ENCODE measurements at regions of chr12 and their contacts with region 1.

Region 1: DNA sequence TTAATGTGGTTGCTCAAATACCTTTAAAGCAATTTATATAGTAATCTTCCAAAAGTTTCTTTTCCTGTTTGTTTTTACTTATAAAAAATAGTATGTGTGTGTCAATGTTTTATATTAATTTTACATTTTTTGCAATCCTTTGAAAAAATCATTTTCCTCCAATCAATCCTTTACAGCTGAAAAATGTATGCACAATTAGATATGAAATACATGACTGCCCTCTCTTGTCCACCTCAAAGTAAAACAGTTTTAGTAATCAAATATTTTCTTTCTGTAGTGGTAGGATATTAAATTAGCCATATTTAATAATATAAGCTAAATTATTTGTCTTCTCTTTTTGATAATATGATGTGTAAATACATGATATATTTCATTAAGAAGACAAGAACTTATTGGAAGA is 269.9 kb downstream of the ADAMTS20 start:
- DNase-seq: peak; percentile 35
- H3K4me3 ChIP-seq: no peak overlapping the region
- H3K27ac ChIP-seq: no peak overlapping the region
- H3K4me1 ChIP-seq: peaks cover 5 to 7% of the 10 kb centered on the region in 2 experiments; a peak in 3 of 4 replicates
- H3K27me3 ChIP-seq: no peaks in the 10 kb centered on the region
- CTCF ChIP-seq: peak; percentile 51
- EP300 ChIP-seq: no peak
- RAD21 ChIP-seq: peak; percentile 85

Region 2: DNA sequence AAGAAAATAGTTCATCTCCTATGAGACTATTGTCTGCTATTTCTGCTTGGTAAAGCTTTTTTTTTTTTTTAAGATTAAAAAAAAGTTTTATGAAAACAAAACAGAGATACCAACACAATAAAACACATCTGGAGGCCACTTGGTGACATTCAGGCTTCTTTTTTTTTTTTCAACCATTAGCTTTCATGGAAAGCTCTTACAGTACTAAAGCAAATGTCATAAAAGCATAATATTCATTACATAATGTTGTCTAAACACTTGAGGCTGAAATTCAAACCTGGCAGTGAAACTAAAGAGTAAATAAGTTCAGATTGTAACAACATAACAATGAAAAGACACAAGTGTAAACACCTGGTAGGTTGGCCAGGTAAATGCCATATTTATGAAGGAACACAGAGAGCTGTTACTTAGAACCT is 707.2 kb before region 1 on chr12:
- CTCF ChIA-PET with region 1: interaction called, 12 read pairs
- POLR2A ChIA-PET with region 1: no interaction called
- DNase-seq: no peak
- H3K4me3 ChIP-seq: no peak overlapping the region
- H3K27ac ChIP-seq: peak overlapping the region in 1 of 2 experiments; percentile 62; a peak in 2 of 4 replicates
- H3K4me1 ChIP-seq: peaks cover 0 to 7% of the 10 kb centered on the region in 2 experiments; a peak in 2 of 4 replicates
- H3K27me3 ChIP-seq: no peaks in the 10 kb centered on the region
- CTCF ChIP-seq: no peak
- EP300 ChIP-seq: no peak
- RAD21 ChIP-seq: no peak

Region 3: DNA sequence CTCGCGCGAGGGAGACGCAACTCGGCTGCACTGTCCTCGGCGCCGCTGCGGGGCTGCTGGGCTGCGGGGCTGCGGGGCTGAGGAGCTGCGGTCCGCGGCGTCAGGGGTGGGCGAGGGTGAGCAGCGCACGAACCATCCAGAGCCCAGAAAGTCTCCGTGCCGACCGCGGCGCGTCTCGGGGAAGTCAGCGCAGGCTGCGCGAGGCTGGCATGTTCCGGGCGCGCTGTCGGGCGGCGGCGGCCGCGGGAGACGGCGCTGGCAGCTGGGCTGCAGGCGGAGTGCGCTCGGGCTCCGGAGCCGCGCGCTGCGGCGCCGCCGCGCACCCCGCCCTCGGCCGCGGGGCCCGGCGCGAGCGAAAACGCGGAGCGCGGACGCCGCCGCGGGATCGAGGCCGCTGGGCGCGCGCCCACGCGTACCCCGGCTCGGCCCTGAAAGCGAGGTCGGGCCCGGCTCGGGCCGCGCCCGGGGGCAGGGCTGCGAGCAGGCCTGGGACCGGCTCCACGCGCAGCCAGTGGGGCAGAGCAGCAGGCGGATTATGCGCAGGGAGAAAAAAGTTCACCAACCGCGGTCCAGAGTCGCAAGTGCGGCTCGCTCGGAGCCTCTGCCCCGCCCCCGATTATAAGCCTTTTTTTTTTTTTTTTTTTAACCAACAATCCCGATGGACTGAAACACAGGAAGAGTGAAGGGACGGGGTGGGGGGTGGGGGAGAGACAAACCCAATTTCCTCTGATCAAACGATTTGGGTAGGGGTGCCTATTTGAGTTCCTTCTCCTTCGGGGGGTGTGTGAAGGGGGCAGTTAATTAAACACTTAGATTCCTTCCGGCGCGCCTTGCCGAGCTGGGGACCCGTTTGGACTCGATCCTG is 692.4 kb before region 1 on chr12 and contains the start of gene PRICKLE1:
- CTCF ChIA-PET with region 1: interaction called, 23 read pairs
- POLR2A ChIA-PET with region 1: no interaction called
- DNase-seq: peak; percentile 90
- H3K4me3 ChIP-seq: peak within 1 kb of the TSS; percentile 61 to 62
- H3K27ac ChIP-seq: peak within 1 kb of the TSS in 1 of 2 experiments; percentile 58; a peak in 2 of 4 replicates
- H3K4me1 ChIP-seq: peaks cover 7 to 25% of the 10 kb centered on the region in 2 experiments; a peak in 3 of 4 replicates
- H3K27me3 ChIP-seq: peaks cover 33% of the 10 kb centered on the region
- CTCF ChIP-seq: no peak
- EP300 ChIP-seq: no peak
- RAD21 ChIP-seq: no peak
- polyA plus RNA-seq, gene PRICKLE1: 0.45 and 1.2 TPM in 2 replicates

Region 4: DNA sequence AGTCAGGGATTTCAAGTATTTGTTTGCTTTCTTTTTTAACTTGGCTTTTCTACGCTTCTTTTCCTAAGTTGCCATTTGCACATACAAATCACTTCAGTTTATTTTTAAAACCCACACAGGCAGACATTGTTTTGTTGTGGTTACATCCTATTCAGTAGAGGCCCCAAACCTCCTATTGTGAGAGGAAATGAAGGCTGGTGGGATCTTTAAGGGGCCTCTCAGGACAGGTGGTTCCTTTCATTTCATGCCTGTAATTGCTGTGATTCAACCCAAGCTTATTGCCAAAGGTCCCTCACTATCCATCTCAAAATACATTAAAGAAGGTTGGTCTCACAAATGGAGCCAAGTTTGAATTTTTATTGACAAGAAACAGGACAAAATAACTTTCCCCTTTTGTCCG is 12.8 kb after region 1 on chr12:
- CTCF ChIA-PET with region 1: interaction called, 11 read pairs
- POLR2A ChIA-PET with region 1: no interaction called
- DNase-seq: no peak
- H3K4me3 ChIP-seq: no peak overlapping the region
- H3K27ac ChIP-seq: no peak overlapping the region
- H3K4me1 ChIP-seq: no peaks in the 10 kb centered on the region; a peak in 1 of 4 replicates
- H3K27me3 ChIP-seq: no peaks in the 10 kb centered on the region
- CTCF ChIP-seq: no peak
- EP300 ChIP-seq: no peak
- RAD21 ChIP-seq: no peak

Measured in SK-N-SH (cell line).